Motor neuron (in vitro differentiated cells): ENCODE measurements at regions of chrX and their contacts with region 1.

Region 1: GRCh38 chrX:48475774-48476577 is at the start of gene FTSJ1:
- ATAC-seq: peak; percentile 90 to 97 (median 94)
- H3K4me3 ChIP-seq: peak within 1 kb of the TSS; percentile 48 to 100 (median 77)
- H3K27ac ChIP-seq: peak within 1 kb of the TSS; percentile 80 to 86
- H3K4me1 ChIP-seq: peaks cover 0 to 19% of the 10 kb centered on the region in 2 donors
- total RNA-seq, gene FTSJ1: 29.8 to 52.9 (median 43.2) TPM

Region 2: DNA sequence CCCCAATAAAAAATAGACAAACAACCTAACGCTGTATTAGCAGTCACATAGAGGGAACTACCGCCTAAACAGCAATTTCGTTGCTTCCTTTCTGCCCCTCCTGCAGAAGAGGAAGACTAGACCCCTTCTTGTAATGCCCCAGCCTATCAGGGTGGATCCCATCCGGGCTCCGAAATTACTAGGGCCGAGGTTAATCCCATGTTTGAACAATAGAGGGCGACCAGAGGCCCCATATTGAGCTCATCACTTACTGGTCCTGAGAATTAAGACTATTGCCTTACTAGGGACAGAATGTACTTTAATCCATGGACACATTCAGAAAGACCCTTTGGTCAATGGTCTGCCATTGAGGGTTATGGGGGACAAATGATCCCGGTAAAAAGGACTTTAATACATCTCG is 392.8 kb before region 1 on chrX:
- in situ Hi-C with region 1: loop called in 1 of 9 experiments (anchors 25 kb)
- ATAC-seq: peak in 7 of 8 experiments; percentile 46 to 92 (median 79)
- H3K4me3 ChIP-seq: no peak overlapping the region
- H3K27ac ChIP-seq: no peak overlapping the region
- H3K4me1 ChIP-seq: peaks cover 0 to 2% of the 10 kb centered on the region in 2 donors